K562 (cell line): ENCODE measurements at regions of chr2 and their contacts with region 1.

Region 1: GRCh38 chr2:85420536-85421259 is 2.2 kb downstream of the SH2D6 start:
- DNase-seq: peak; percentile 88 to 94 (median 90)
- ATAC-seq: peak; percentile 76
- H3K4me3 ChIP-seq: no peak overlapping the region; the same call in 1 of the 2 replicates
- H3K27ac ChIP-seq: peak overlapping the region; percentile 79
- H3K4me1 ChIP-seq: peaks cover 50 to 59% of the 10 kb centered on the region in 2 experiments
- H3K27me3 ChIP-seq: no peaks in the 10 kb centered on the region
- CTCF ChIP-seq: peak; percentile 95 to 99 (median 98)
- EP300 ChIP-seq: peak; percentile 32; the same call in 1 of the 2 replicates
- POLR2A ChIP-seq: peak; percentile 25; the same call in 1 of the 2 replicates
- RAD21 ChIP-seq: peak; percentile 100

Region 2: DNA sequence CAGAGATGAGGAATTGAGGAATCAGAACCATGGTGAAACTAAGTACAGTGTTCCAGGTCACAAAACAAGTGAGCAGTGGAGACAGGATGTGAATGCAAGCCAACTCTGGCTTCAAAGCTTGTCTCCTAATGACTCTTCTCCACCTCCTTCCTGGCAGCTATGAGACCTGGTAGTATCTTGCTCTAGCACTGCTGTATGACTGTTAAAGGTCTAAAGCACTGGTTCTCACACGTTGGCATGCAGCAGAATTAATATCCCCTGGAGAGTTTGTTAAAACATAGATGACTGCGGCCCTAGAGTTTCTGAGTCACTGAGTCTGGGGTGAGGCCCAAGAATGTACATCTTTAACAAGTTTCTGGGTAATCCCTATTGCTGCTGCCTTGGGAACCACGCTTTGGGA is 1024.9 kb before region 1 on chr2:
- CTCF ChIA-PET with region 1: no interaction called
- POLR2A ChIA-PET with region 1: no interaction called
- in situ Hi-C with region 1: no loop called
- intact Hi-C with region 1: no loop called
- DNase-seq: no peak
- ATAC-seq: no peak
- H3K4me3 ChIP-seq: no peak overlapping the region
- H3K27ac ChIP-seq: no peak overlapping the region
- H3K4me1 ChIP-seq: no peaks in the 10 kb centered on the region
- H3K27me3 ChIP-seq: no peaks in the 10 kb centered on the region
- CTCF ChIP-seq: no peak
- EP300 ChIP-seq: no peak
- POLR2A ChIP-seq: no peak
- RAD21 ChIP-seq: no peak

Region 3: GRCh38 chr2:85327822-85328617 is 92.7 kb before region 1 on chr2 and contains the start of gene TGOLN2:
- CTCF ChIA-PET with region 1: no interaction called
- POLR2A ChIA-PET with region 1: no interaction called
- in situ Hi-C with region 1: no loop called
- intact Hi-C with region 1: loop called (anchors 5 kb)
- DNase-seq: peak; percentile 95 to 98 (median 97)
- ATAC-seq: peak; percentile 94
- H3K4me3 ChIP-seq: peak within 1 kb of the TSS; percentile 82
- H3K27ac ChIP-seq: peak within 1 kb of the TSS; percentile 97
- H3K4me1 ChIP-seq: peaks cover 21 to 27% of the 10 kb centered on the region in 2 experiments; a peak in 4 of 5 replicates
- H3K27me3 ChIP-seq: no peaks in the 10 kb centered on the region
- CTCF ChIP-seq: 0 out of 6 replicates have a peak, but pooled peaks of 2 of the 3 experiments have one; percentile 3 to 14
- EP300 ChIP-seq: no peak
- POLR2A ChIP-seq: peak; percentile 99
- RAD21 ChIP-seq: no peak
- polyA plus RNA-seq, gene TGOLN2: 13.0 to 18.0 TPM

Region 4: GRCh38 chr2:85504778-85505323 is 84.2 kb after region 1 on chr2:
- CTCF ChIA-PET with region 1: no interaction called
- POLR2A ChIA-PET with region 1: interaction called, 4 read pairs
- in situ Hi-C with region 1: no loop called
- intact Hi-C with region 1: loop called (anchors 2 kb)
- DNase-seq: peak in 1 of 4 experiments; percentile 54
- ATAC-seq: no peak
- H3K4me3 ChIP-seq: no peak overlapping the region
- H3K27ac ChIP-seq: no peak overlapping the region
- H3K4me1 ChIP-seq: peaks cover 32 to 38% of the 10 kb centered on the region in 2 experiments
- H3K27me3 ChIP-seq: no peaks in the 10 kb centered on the region
- CTCF ChIP-seq: no peak
- EP300 ChIP-seq: no peak
- POLR2A ChIP-seq: no peak
- RAD21 ChIP-seq: no peak

Region 5: GRCh38 chr2:85524336-85524933 is 103.7 kb after region 1 on chr2:
- CTCF ChIA-PET with region 1: no interaction called
- POLR2A ChIA-PET with region 1: no interaction called
- in situ Hi-C with region 1: no loop called
- intact Hi-C with region 1: no loop called
- DNase-seq: peak in 3 of 4 experiments; percentile 20 to 72 (median 54)
- ATAC-seq: peak; percentile 93
- H3K4me3 ChIP-seq: no peak overlapping the region
- H3K27ac ChIP-seq: peak overlapping the region; percentile 65
- H3K4me1 ChIP-seq: peaks cover 26 to 27% of the 10 kb centered on the region in 2 experiments
- H3K27me3 ChIP-seq: no peaks in the 10 kb centered on the region
- CTCF ChIP-seq: no peak
- EP300 ChIP-seq: no peak
- POLR2A ChIP-seq: no peak
- RAD21 ChIP-seq: no peak

Region 6: DNA sequence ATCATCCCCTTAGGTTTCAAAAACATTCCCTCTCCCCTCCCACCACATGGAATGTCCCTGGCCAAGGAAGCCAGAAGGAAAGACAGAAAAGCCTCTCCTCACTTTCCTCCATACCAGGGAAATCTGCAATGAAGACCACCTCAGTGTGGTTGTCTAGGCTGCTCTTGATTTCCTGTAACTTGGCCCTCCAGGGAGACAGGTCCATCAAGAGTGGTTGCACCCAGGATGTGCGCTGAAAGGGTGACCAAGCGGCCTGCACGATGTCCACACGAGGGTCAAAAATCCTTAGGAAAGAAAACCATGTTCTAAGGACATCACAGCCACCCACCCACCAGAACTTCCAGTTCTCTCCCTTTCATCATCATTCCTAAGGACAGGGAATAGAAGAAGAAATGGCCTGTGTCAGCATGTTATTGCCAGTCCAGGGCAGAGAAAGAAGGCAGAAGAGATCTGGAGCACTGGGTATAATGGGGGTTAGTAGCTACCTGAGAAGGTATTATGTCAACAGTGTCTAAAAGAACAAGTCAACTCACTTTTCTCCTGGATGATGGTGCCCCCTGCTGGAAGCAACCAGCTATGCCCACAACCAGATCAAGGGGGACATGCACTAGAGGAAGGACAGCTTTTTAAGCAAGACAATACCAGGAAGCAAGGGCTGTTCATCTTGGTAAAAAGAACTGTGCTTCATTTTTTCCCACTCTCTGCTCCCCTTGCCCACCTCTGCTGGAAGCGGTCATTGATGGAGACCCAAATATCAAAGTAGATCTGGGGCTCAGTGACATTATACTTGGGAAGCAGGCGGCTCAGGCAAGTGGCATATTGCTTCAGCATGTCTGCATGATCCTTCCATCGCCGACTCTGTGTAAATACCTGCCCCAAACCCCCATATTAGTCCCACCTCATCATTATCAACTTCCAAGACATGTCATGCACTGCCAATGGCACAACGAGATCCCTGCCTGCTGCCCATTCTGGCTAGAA is 131.3 kb after region 1 on chr2:
- CTCF ChIA-PET with region 1: interaction called, 63 read pairs
- POLR2A ChIA-PET with region 1: interaction called, 1,576 read pairs
- in situ Hi-C with region 1: loop called (anchors 5 kb)
- intact Hi-C with region 1: loop called (anchors 1 kb)
- DNase-seq: peak; percentile 64 to 88 (median 72)
- ATAC-seq: peak; percentile 81
- H3K4me3 ChIP-seq: no peak overlapping the region
- H3K27ac ChIP-seq: no peak overlapping the region; the same call in 2 of the 3 replicates
- H3K4me1 ChIP-seq: no peaks in the 10 kb centered on the region; a peak in 1 of 5 replicates
- H3K27me3 ChIP-seq: no peaks in the 10 kb centered on the region
- CTCF ChIP-seq: peak; percentile 83 to 95 (median 91)
- EP300 ChIP-seq: no peak
- POLR2A ChIP-seq: no peak
- RAD21 ChIP-seq: peak; percentile 97 to 98

Region 7: DNA sequence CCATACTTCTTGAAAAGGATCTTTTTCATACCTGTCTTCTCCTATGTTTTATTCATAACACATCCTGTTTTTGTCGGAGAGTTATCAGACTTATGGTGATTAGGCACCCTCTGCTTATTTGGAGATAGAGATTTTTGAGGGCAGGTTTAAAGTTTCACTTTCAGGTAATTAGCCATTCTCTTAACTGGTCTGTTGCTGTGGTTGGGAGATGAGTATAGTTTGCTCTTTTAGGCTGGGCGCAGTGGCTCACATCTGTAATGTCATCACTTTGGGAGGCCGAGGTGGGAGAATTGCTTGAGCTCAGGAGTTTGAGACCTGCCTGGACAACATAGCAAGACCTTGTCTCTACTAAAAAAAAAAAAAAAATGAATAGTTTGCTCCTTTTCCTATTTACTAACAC is 222.0 kb after region 1 on chr2:
- CTCF ChIA-PET with region 1: no interaction called
- POLR2A ChIA-PET with region 1: no interaction called
- in situ Hi-C with region 1: no loop called
- intact Hi-C with region 1: loop called (anchors 1 kb)
- DNase-seq: no peak
- ATAC-seq: no peak
- H3K4me3 ChIP-seq: no peak overlapping the region
- H3K27ac ChIP-seq: no peak overlapping the region
- H3K4me1 ChIP-seq: no peaks in the 10 kb centered on the region
- H3K27me3 ChIP-seq: no peaks in the 10 kb centered on the region
- CTCF ChIP-seq: no peak
- EP300 ChIP-seq: no peak
- POLR2A ChIP-seq: no peak
- RAD21 ChIP-seq: no peak

Region 8: GRCh38 chr2:85718009-85718391 is 297.3 kb after region 1 on chr2:
- CTCF ChIA-PET with region 1: no interaction called
- POLR2A ChIA-PET with region 1: interaction called, 3 read pairs
- in situ Hi-C with region 1: no loop called
- intact Hi-C with region 1: loop called (anchors 1 kb)
- DNase-seq: peak; percentile 36 to 55 (median 42)
- ATAC-seq: peak; percentile 86
- H3K4me3 ChIP-seq: no peak overlapping the region
- H3K27ac ChIP-seq: no peak overlapping the region
- H3K4me1 ChIP-seq: peaks cover 7 to 15% of the 10 kb centered on the region in 2 experiments; a peak in 3 of 5 replicates
- H3K27me3 ChIP-seq: peaks cover 3 to 31% of the 10 kb centered on the region in 2 experiments; a peak in 4 of 5 replicates
- CTCF ChIP-seq: peak; percentile 60 to 67 (median 67)
- EP300 ChIP-seq: no peak
- POLR2A ChIP-seq: no peak
- RAD21 ChIP-seq: peak; percentile 62 to 75